MCF 10A (cell line): ENCODE measurements at regions of chrX and their contacts with region 1.

Region 1: GRCh38 chrX:110665223-110666002 is 130.2 kb downstream of the CHRDL1 start:
- DNase-seq: peak; percentile 57
- H3K4me3 Mint-ChIP-seq: no peak overlapping the region
- H3K27ac Mint-ChIP-seq: no peak overlapping the region
- H3K4me1 Mint-ChIP-seq: no peaks in the 10 kb centered on the region
- H3K27me3 Mint-ChIP-seq: peaks cover 65% of the 10 kb centered on the region
- CTCF ChIP-seq: peak; percentile 44

Region 2: DNA sequence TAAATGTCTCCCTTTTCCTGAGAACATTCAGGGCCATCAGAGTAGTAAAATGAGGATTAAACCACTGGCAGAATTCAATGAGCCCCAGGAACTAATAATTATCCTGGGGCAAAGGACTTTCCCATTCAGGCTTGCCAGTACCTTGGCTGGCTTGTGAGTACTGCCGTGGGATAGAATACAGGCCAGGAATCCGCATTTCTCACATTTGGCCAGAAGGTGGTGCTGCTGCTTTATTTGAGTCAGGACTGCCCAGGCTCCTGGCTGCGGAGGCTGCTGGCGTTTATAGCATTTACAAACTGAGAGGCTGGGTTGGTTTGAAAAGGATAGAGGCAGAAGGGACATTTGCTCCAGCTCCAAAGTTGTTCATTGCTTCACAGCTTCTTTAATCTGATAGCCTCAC is 215.4 kb before region 1 on chrX:
- CTCF ChIA-PET with region 1: no interaction called
- POLR2A ChIA-PET with region 1: no interaction called
- intact Hi-C with region 1: loop called (anchors 1 kb)
- DNase-seq: peak; percentile 84
- H3K4me3 Mint-ChIP-seq: no peak overlapping the region
- H3K27ac Mint-ChIP-seq: no peak overlapping the region
- H3K4me1 Mint-ChIP-seq: no peaks in the 10 kb centered on the region
- H3K27me3 Mint-ChIP-seq: peaks cover 80% of the 10 kb centered on the region
- CTCF ChIP-seq: peak; percentile 88

Region 3: DNA sequence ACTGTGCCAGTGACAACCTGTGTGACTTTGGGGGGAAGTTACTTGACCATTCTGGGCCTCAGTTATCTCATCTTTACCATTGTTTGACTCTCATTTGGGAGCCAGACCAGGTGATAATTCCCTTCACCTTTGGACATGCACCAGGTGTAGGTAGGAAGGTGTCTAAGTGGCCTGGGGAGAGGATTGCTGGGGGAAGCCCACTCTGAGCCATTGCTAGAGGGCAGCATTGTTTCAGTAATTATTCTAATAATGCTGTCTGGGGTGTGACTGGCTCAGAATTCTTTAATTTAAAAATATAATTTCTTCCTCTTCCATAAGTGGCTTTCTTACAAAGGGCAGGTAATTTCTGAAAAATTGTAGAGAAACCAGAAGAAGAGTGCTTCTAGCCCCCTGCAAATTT is 202.5 kb before region 1 on chrX:
- CTCF ChIA-PET with region 1: interaction called, 3 read pairs
- POLR2A ChIA-PET with region 1: no interaction called
- intact Hi-C with region 1: loop called (anchors 1 kb)
- DNase-seq: peak; percentile 6
- H3K4me3 Mint-ChIP-seq: no peak overlapping the region
- H3K27ac Mint-ChIP-seq: no peak overlapping the region
- H3K4me1 Mint-ChIP-seq: no peaks in the 10 kb centered on the region
- H3K27me3 Mint-ChIP-seq: peaks cover 71% of the 10 kb centered on the region
- CTCF ChIP-seq: peak; percentile 30

Region 4: GRCh38 chrX:110541266-110541665 is 124.1 kb before region 1 on chrX:
- CTCF ChIA-PET with region 1: no interaction called
- POLR2A ChIA-PET with region 1: no interaction called
- intact Hi-C with region 1: no loop called
- DNase-seq: no peak
- H3K4me3 Mint-ChIP-seq: no peak overlapping the region
- H3K27ac Mint-ChIP-seq: no peak overlapping the region
- H3K4me1 Mint-ChIP-seq: no peaks in the 10 kb centered on the region
- H3K27me3 Mint-ChIP-seq: peaks cover 40% of the 10 kb centered on the region
- CTCF ChIP-seq: no peak